ENCODE measurements at regions of chr6 and their contacts with region 1.

Region 1: DNA sequence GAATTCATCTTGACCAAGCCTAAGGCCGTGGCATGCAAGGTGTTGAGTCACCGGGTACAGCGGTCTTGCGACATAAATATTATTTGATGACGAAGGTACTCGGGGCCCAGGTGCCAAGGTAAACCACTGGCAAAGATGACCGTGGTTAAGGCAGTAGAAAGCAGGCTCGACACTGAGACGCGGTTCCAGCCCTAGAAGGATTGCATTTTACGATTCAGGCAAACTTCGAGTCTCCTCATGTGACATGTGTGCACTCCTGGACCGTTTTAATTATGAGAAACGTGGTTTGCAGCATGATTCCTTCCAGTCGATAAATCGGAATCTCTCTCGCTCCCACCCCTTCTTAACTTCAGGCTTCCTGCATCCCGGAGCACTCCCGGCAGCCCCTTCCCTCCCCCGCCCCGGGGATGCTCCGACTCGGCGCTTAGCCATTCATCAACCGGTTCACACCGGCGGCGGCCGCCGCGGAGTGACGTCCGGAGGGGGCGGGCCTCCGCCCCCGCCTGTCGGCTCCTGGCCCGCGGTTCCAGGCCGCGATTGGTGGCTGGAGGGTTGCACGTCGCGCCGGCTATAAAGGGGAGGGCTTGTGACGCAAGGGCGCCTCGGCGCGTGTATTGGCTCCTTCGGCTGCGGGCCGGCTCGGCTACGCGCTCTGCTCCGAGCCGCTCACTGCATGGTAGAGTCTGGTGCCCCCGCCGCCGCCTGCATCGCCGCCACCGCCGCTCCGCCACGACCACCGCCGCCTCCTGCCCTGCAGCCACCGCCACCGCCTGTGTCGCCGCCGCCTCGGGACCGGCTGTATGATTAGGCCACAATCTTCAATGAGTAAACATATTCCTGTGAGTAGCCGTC is at the starts of genes LOC128125822 and PTP4A1:
- DNase-seq: peak; percentile 96
- H3K4me3 ChIP-seq: peak within 1 kb of the TSS; percentile 83 to 92 (median 88)
- H3K27ac ChIP-seq: peak within 1 kb of the TSS; percentile 99
- H3K4me1 ChIP-seq: peaks cover 18% of the 10 kb centered on the region
- H3K27me3 ChIP-seq: no peaks in the 10 kb centered on the region
- CTCF ChIP-seq: peak; percentile 13 to 36
- total RNA-seq, gene PTP4A1: 90.2 to 175 TPM

Region 2: DNA sequence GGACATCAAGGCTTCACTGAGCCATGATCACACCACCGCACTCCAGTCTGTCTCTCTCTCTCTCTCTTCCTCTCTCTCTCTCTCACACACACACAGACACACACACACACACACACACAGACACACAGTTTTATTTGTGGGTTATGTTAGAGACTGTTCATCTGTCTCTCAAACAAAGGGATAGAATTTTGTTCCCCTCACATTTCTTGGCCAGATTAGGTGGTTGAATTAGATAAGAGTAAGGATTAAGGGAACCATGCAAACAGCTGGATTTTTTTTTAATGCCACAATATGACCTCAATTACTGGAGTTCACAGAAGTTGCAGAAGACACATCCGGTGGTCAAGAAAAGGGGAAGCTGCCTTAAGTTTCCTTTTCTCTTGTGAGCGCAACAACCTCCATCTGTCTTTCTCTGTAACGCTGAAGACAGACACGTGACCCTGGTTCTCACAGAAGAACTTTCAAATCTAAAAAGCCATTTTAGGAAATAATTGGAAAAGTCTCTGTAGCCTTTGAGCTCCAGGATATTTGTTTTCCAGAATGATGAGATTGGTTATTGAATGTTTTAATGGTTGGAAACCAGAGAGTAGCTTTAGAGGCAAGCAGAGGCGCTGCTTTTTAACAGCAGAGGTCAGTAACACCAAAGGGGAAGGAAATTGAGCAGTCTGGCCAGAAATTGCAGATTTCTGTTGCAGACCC is 219.4 kb before region 1 on chr6:
- CTCF ChIA-PET with region 1: interaction called, 5 read pairs
- dilution Hi-C with region 1: no loop called
- in situ Hi-C with region 1: no loop called
- intact Hi-C with region 1: loop called (anchors 1 kb)
- DNase-seq: peak; percentile 22
- H3K4me3 ChIP-seq: no peak overlapping the region
- H3K27ac ChIP-seq: no peak overlapping the region
- H3K4me1 ChIP-seq: peaks cover 10% of the 10 kb centered on the region
- H3K27me3 ChIP-seq: no peaks in the 10 kb centered on the region
- CTCF ChIP-seq: peak; percentile 68 to 76

Region 3: GRCh38 chr6:63403725-63404124 is 168.4 kb before region 1 on chr6:
- CTCF ChIA-PET with region 1: no interaction called
- dilution Hi-C with region 1: no loop called
- in situ Hi-C with region 1: no loop called
- intact Hi-C with region 1: no loop called
- DNase-seq: peak; percentile 5
- H3K4me3 ChIP-seq: no peak overlapping the region
- H3K27ac ChIP-seq: no peak overlapping the region
- H3K4me1 ChIP-seq: no peaks in the 10 kb centered on the region
- H3K27me3 ChIP-seq: no peaks in the 10 kb centered on the region
- CTCF ChIP-seq: no peak

Region 4: DNA sequence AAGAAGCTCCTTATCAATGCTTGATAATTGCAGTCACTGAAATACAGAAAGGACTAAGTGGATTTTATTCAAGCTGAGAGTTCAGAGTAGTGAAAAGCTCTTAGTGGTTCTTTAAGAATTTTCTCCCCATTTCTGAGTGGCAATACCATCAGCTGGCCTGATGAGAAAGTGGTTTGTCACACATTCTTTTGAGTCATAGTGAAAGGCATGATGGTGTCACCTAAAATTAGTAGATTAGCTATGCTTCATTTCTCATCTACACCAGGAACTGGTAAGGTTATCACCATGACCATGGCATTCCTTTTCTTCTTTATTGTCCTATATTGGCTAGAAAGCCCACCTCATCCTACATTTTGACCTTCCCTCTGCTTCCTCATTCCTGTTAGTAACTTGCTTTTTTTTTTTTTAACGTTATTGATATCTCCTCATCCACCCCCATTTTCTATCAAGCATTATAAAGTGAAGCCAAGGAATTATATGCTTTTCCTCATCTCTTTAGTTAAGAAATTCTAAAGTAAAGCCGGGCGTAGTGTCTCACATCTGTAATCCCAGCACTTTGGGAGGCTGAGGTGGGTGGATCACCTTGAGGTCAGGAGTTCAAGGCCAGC is 67.2 kb before region 1 on chr6:
- CTCF ChIA-PET with region 1: no interaction called
- dilution Hi-C with region 1: no loop called
- in situ Hi-C with region 1: no loop called
- intact Hi-C with region 1: loop called (anchors 5 kb)
- DNase-seq: no peak
- H3K4me3 ChIP-seq: no peak overlapping the region
- H3K27ac ChIP-seq: no peak overlapping the region
- H3K4me1 ChIP-seq: peaks cover 4% of the 10 kb centered on the region
- H3K27me3 ChIP-seq: no peaks in the 10 kb centered on the region
- CTCF ChIP-seq: no peak

Region 5: GRCh38 chr6:63537126-63537958 is 34.8 kb before region 1 on chr6:
- CTCF ChIA-PET with region 1: no interaction called
- dilution Hi-C with region 1: no loop called
- in situ Hi-C with region 1: no loop called
- intact Hi-C with region 1: loop called (anchors 2 kb)
- DNase-seq: peak; percentile 94
- H3K4me3 ChIP-seq: peak overlapping the region in 1 of 3 experiments; percentile 13
- H3K27ac ChIP-seq: peak overlapping the region; percentile 89
- H3K4me1 ChIP-seq: peaks cover 18% of the 10 kb centered on the region
- H3K27me3 ChIP-seq: no peaks in the 10 kb centered on the region
- CTCF ChIP-seq: no peak

Measured in mammary epithelial cell (primary cell).